Left colon (tissue), 2 donors: ENCODE measurements at regions of chr2 and their contacts with region 1.

Region 1: DNA sequence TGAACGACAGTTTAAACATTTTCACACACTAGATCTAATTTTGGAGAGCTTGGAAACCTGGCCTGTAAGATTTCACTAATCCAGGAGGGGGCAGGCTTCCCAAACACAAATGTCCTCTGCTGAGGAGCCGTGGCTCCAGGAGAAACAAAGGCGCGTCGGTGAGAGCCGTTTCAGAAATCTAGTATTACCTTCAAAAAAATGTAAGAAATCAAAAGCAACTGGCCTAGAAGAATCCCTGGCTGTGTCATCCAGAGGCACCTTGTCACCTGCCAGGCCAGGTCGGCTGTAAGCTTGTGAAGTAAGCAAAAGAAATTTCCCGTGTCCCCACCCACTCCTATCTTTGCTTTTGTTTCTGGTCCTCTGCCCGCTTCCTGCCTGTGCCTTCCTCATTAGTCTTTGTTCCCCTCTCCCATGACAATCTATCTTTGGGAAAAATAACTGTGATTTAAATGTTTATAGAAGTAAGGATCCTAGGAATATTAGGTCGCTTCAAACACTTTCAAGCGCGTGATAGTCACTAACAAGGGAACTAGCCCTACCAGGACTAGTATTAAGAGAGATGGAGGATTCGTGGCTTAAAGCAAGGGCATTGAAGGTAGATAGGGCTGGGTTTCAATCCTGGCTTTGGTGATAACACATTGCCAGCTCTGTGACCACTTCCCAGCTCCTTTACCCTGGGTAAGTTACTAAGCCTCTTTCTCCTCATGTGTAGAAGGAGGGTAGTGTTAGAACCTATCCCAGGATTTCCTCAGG is 99.5 kb upstream of the STK39 start:
- DNase-seq: peak; percentile 58 to 72
- ATAC-seq: peak; percentile 67

Region 2: DNA sequence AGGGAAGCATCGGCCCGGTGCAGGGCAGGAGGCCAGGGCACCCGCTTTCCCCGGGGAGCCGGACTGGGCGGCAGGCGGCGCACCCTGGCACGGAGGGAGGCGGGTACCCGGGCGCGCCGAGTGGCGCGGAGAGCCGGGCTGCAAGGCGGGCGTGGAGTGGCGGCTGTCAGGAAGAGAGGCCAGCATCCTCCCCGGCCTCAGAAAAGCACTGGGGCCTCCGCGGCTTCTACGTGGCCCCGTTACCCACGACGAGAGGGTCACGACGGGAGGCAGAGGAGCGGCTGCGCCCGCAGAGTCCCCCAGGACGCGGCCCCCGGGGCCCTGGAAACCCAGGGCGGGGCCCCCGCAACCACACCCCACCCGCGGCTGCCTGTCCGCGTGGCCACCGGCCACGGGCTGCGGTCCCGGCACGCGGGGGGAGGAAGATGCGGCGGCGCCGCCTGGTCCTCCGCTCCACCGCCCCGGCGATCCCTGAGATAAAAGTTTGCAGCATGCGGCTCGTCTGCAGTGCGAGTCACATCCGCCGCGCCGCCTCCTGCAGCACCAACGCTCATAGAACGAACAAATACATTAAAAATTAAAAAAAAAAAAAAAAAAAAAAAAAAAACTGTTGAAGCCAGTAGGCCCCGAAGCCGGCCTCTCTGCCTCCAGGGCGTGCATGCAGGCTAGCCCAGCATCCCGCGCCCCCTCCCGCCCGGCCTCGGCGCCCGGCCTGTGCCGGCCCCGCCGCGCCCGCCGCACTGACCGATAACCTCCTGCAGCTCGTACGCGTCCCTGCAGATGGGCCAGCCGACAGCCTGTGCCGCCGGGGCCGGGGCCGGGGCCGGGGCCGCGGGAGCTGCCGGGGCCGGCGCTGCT is 100.2 kb before region 1 on chr2:
- intact Hi-C with region 1: no loop called
- DNase-seq: peak; percentile 73 to 84
- ATAC-seq: peak; percentile 77

Region 3: GRCh38 chr2:168705534-168706470 is 358.9 kb after region 1 on chr2:
- intact Hi-C with region 1: loop called in 1 of 2 experiments (anchors 10 kb)
- DNase-seq: peak in 1 of 2 donors; percentile 25
- ATAC-seq: peak; percentile 77

Region 4: GRCh38 chr2:168758970-168759820 is 412.3 kb after region 1 on chr2:
- intact Hi-C with region 1: loop called in 1 of 2 experiments (anchors 5 kb)
- DNase-seq: no peak
- ATAC-seq: peak; percentile 81

Region 5: GRCh38 chr2:168920504-168921157 is 573.7 kb after region 1 on chr2:
- intact Hi-C with region 1: loop called in 1 of 2 experiments (anchors 5 kb)
- DNase-seq: no peak
- ATAC-seq: peak; percentile 50